ENCODE measurements at regions of chr12 and their contacts with region 1.

Region 1: DNA sequence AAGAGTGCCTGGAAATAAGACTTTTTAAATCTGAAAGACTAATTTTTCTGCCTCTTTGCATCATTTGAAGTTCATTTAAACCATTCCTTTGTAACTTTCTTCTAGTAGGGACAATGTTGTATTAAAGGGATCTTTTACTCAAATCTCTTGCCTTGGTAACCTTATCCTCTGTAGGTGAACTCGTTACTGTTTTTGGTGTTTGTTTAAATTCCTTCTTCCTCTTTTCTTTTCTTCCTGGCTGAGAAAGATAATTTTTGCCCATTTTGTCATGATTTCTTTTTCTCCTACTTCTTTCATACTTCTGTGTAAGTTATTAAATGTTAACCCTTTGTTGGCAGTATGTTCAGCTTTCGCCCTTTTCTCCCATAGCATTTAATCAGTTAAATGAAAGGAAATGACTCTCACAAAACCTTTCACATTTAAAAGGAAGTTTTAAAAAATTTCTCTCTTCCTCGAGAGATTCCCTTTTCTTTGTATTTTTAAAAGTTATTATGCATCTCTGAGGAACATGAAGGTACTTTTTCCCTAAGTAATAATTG is 10.3 kb downstream of the VEZT start:
- DNase-seq: peak; percentile 48
- H3K4me3 ChIP-seq: peak overlapping the region in 1 of 3 experiments; percentile 41
- H3K27ac ChIP-seq: peak overlapping the region; percentile 37
- H3K4me1 ChIP-seq: peaks cover 37% of the 10 kb centered on the region
- H3K27me3 ChIP-seq: no peaks in the 10 kb centered on the region
- CTCF ChIP-seq: no peak
- POLR2A ChIP-seq: no peak

Region 2: DNA sequence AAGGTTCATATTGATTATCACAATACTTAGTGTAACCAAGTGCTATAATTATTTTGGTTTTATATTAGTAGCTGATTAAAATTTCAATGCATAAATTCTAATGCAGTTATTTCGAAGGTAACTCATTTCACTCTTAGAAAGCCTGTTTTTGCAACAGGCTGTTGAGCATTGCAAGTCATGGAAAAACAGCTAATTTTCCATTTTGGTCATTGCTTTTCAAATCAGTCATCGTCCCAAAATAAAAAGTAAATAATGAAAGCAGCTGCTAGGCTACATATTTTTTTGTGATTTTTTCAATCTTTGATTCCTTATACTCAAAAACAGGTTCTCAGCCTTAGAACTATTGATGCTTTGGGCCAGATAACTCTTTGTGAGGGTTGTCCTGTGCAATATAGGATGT is 12.7 kb after region 1 on chr12:
- CTCF ChIA-PET with region 1: interaction called, 11 read pairs
- POLR2A ChIA-PET with region 1: no interaction called
- dilution Hi-C with region 1: no loop called
- intact Hi-C with region 1: no loop called
- DNase-seq: no peak
- H3K4me3 ChIP-seq: no peak overlapping the region
- H3K27ac ChIP-seq: no peak overlapping the region
- H3K4me1 ChIP-seq: no peaks in the 10 kb centered on the region
- H3K27me3 ChIP-seq: no peaks in the 10 kb centered on the region
- CTCF ChIP-seq: no peak
- POLR2A ChIP-seq: no peak

Measured in endothelial cell of umbilical vein (primary cell).